ENCODE measurements at regions of chr12 and their contacts with region 1.

Region 1: GRCh38 chr12:80269803-80270552 is 170.6 kb downstream of the OTOGL start:
- DNase-seq: peak in 3 of 5 donors; percentile 8 to 13 (median 12)
- H3K4me3 ChIP-seq: no peak overlapping the region
- H3K4me3 Mint-ChIP-seq: no peak overlapping the region
- H3K27ac ChIP-seq: no peak overlapping the region
- H3K27ac Mint-ChIP-seq: no peak overlapping the region
- H3K4me1 ChIP-seq: no peaks in the 10 kb centered on the region
- H3K4me1 Mint-ChIP-seq: no peaks in the 10 kb centered on the region
- H3K27me3 ChIP-seq: no peaks in the 10 kb centered on the region
- H3K27me3 Mint-ChIP-seq: peaks cover 1 to 3% of the 10 kb centered on the region in 2 donors

Region 2: GRCh38 chr12:79886917-79887519 is 383.0 kb before region 1 on chr12:
- CTCF ChIA-PET with region 1: no interaction called
- POLR2A ChIA-PET with region 1: no interaction called
- intact Hi-C with region 1: loop called (anchors 1 kb)
- DNase-seq: peak in 4 of 5 donors; percentile 35 to 50 (median 38)
- H3K4me3 ChIP-seq: no peak overlapping the region
- H3K4me3 Mint-ChIP-seq: peak overlapping the region in 1 of 8 donors; percentile 2
- H3K27ac ChIP-seq: no peak overlapping the region
- H3K27ac Mint-ChIP-seq: no peak overlapping the region
- H3K4me1 ChIP-seq: peaks cover 71% of the 10 kb centered on the region
- H3K4me1 Mint-ChIP-seq: peaks cover 55 to 84% (median 68%) of the 10 kb centered on the region in 4 donors
- H3K27me3 ChIP-seq: no peaks in the 10 kb centered on the region
- H3K27me3 Mint-ChIP-seq: no peaks in the 10 kb centered on the region

Region 3: GRCh38 chr12:80053048-80053790 is 216.8 kb before region 1 on chr12:
- CTCF ChIA-PET with region 1: interaction called, 3 read pairs
- POLR2A ChIA-PET with region 1: no interaction called
- intact Hi-C with region 1: loop called (anchors 1 kb)
- DNase-seq: no peak
- H3K4me3 ChIP-seq: no peak overlapping the region
- H3K4me3 Mint-ChIP-seq: no peak overlapping the region
- H3K27ac ChIP-seq: no peak overlapping the region
- H3K27ac Mint-ChIP-seq: no peak overlapping the region
- H3K4me1 ChIP-seq: no peaks in the 10 kb centered on the region
- H3K4me1 Mint-ChIP-seq: peaks cover 4 to 9% (median 5%) of the 10 kb centered on the region in 4 donors
- H3K27me3 ChIP-seq: no peaks in the 10 kb centered on the region
- H3K27me3 Mint-ChIP-seq: peaks cover 1 to 4% of the 10 kb centered on the region in 2 donors

Region 4: DNA sequence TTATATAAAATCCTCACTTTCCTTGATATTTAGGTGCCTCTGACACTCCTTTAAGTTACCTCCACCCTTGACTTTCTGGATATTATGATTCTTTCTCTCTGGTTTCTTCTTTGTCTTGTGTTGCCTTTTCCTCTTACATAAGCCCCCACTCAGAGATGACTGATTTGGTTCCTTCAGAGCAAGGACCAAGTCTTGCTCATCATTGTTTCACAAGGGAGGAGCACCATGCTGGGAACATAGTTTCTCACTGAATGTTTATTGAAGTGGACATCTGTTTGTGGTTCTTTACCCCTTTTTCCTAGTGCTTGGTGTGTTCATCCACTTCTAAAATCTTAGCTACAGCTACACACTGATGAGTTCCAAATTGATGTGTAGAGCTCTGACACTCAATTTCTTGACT is 12.8 kb after region 1 on chr12:
- CTCF ChIA-PET with region 1: interaction called, 3 read pairs
- POLR2A ChIA-PET with region 1: no interaction called
- intact Hi-C with region 1: loop called (anchors 1 kb)
- DNase-seq: no peak
- H3K4me3 ChIP-seq: no peak overlapping the region
- H3K4me3 Mint-ChIP-seq: no peak overlapping the region
- H3K27ac ChIP-seq: no peak overlapping the region
- H3K27ac Mint-ChIP-seq: no peak overlapping the region
- H3K4me1 ChIP-seq: no peaks in the 10 kb centered on the region
- H3K4me1 Mint-ChIP-seq: no peaks in the 10 kb centered on the region
- H3K27me3 ChIP-seq: no peaks in the 10 kb centered on the region
- H3K27me3 Mint-ChIP-seq: no peaks in the 10 kb centered on the region

Measured in CD4-positive, alpha-beta memory T cell (primary cell).